B cell (primary cell): ENCODE measurements at regions of chr18 and their contacts with region 1.

Region 1: GRCh38 chr18:58871514-58872420 is 7.1 kb downstream of the ZNF532 start:
- DNase-seq: no peak
- ATAC-seq: no peak
- H3K4me3 ChIP-seq: no peak overlapping the region
- H3K4me3 Mint-ChIP-seq: no peak overlapping the region
- H3K27ac ChIP-seq: no peak overlapping the region
- H3K27ac Mint-ChIP-seq: peak overlapping the region; percentile 22
- H3K4me1 ChIP-seq: peaks cover 4 to 25% of the 10 kb centered on the region in 2 donors
- H3K4me1 Mint-ChIP-seq: peaks cover 38% of the 10 kb centered on the region
- H3K27me3 ChIP-seq: no peaks in the 10 kb centered on the region
- H3K27me3 Mint-ChIP-seq: no peaks in the 10 kb centered on the region
- CTCF ChIP-seq: no peak

Region 2: GRCh38 chr18:58768293-58768974 is 103.3 kb before region 1 on chr18:
- CTCF ChIA-PET with region 1: no interaction called
- POLR2A ChIA-PET with region 1: no interaction called
- intact Hi-C with region 1: no loop called
- DNase-seq: peak; percentile 85
- ATAC-seq: peak; percentile 83
- H3K4me3 ChIP-seq: peak overlapping the region in 3 of 5 experiments; percentile 12 to 44 (median 35)
- H3K4me3 Mint-ChIP-seq: peak overlapping the region; percentile 70
- H3K27ac ChIP-seq: no peak overlapping the region
- H3K27ac Mint-ChIP-seq: no peak overlapping the region
- H3K4me1 ChIP-seq: peaks cover 3 to 13% of the 10 kb centered on the region in 2 donors
- H3K4me1 Mint-ChIP-seq: peaks cover 11% of the 10 kb centered on the region
- H3K27me3 ChIP-seq: peaks cover 0 to 35% (median 3%) of the 10 kb centered on the region in 4 experiments
- H3K27me3 Mint-ChIP-seq: peaks cover 25% of the 10 kb centered on the region
- CTCF ChIP-seq: peak; percentile 66

Region 3: GRCh38 chr18:58887613-58887963 is 15.8 kb after region 1 on chr18:
- CTCF ChIA-PET with region 1: interaction called, 3 read pairs
- POLR2A ChIA-PET with region 1: interaction called, 10 read pairs
- intact Hi-C with region 1: loop called (anchors 2 kb)
- DNase-seq: peak; percentile 63
- ATAC-seq: peak; percentile 84
- H3K4me3 ChIP-seq: peak overlapping the region in 2 of 5 experiments; percentile 5 to 22
- H3K4me3 Mint-ChIP-seq: peak overlapping the region; percentile 68
- H3K27ac ChIP-seq: peak overlapping the region; percentile 31 to 54
- H3K27ac Mint-ChIP-seq: peak overlapping the region; percentile 84
- H3K4me1 ChIP-seq: peaks cover 20 to 28% of the 10 kb centered on the region in 2 donors
- H3K4me1 Mint-ChIP-seq: peaks cover 30% of the 10 kb centered on the region
- H3K27me3 ChIP-seq: no peaks in the 10 kb centered on the region
- H3K27me3 Mint-ChIP-seq: no peaks in the 10 kb centered on the region
- CTCF ChIP-seq: no peak